ENCODE measurements at regions of chr2 and their contacts with region 1.

Region 1: DNA sequence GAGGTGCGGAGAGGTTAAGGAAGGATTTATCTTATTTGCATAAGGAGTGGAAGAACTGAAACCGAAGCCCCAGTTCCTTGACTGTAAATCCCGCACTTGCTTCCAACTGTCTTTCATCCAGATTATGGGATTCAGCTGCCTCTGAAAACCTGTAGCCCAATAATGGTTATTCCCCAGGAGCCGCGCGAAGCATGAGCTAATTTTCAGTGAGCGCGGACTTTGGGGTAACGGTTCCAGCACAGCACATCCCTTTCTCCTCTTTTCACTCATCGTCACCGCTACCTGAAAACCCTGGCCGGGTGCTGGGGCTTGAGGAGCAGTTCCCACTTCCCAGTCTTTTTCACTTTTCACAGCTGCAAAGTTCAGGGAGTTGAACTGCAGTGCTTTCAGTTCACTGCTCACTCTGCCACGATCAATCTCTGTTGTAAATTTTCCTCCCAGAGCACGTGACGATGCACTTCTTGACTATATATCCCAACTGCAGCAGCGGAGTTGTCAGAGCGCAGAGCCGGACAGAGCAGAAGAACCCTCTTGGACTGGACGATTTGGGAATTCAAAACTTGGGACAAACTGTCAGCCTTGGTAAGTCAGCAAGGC is at the start of gene KCNE4:
- DNase-seq: peak in 4 of 5 donors; percentile 35 to 68 (median 54)
- H3K4me3 ChIP-seq: peak within 1 kb of the TSS; percentile 38
- H3K27ac ChIP-seq: peak within 1 kb of the TSS; percentile 64 to 81
- H3K4me1 ChIP-seq: peaks cover 10% of the 10 kb centered on the region
- H3K27me3 ChIP-seq: no peaks in the 10 kb centered on the region
- CTCF ChIP-seq: no peak
- EP300 ChIP-seq: no peak
- POLR2A ChIP-seq: peak; percentile 61
- total RNA-seq, gene KCNE4: 3.0 to 13.4 (median 8.0) TPM

Region 2: GRCh38 chr2:222860740-222861410 is 190.9 kb before region 1 on chr2 and contains the start of gene ACSL3:
- intact Hi-C with region 1: loop called in 1 of 4 experiments (anchors 10 kb)
- DNase-seq: peak; percentile 91 to 96 (median 94)
- H3K4me3 ChIP-seq: peak within 1 kb of the TSS; percentile 80
- H3K27ac ChIP-seq: peak within 1 kb of the TSS; percentile 80 to 93
- H3K4me1 ChIP-seq: peaks cover 13% of the 10 kb centered on the region
- H3K27me3 ChIP-seq: no peaks in the 10 kb centered on the region
- CTCF ChIP-seq: peak; percentile 7 to 58 (median 34)
- EP300 ChIP-seq: no peak
- POLR2A ChIP-seq: peak; percentile 94
- total RNA-seq, gene ACSL3: 37.0 to 85.1 (median 50.0) TPM

Measured in ovary (tissue), 10 donors.